Prostate gland (tissue), 2 donors: ENCODE measurements at regions of chr1 and their contacts with region 1.

Region 1: DNA sequence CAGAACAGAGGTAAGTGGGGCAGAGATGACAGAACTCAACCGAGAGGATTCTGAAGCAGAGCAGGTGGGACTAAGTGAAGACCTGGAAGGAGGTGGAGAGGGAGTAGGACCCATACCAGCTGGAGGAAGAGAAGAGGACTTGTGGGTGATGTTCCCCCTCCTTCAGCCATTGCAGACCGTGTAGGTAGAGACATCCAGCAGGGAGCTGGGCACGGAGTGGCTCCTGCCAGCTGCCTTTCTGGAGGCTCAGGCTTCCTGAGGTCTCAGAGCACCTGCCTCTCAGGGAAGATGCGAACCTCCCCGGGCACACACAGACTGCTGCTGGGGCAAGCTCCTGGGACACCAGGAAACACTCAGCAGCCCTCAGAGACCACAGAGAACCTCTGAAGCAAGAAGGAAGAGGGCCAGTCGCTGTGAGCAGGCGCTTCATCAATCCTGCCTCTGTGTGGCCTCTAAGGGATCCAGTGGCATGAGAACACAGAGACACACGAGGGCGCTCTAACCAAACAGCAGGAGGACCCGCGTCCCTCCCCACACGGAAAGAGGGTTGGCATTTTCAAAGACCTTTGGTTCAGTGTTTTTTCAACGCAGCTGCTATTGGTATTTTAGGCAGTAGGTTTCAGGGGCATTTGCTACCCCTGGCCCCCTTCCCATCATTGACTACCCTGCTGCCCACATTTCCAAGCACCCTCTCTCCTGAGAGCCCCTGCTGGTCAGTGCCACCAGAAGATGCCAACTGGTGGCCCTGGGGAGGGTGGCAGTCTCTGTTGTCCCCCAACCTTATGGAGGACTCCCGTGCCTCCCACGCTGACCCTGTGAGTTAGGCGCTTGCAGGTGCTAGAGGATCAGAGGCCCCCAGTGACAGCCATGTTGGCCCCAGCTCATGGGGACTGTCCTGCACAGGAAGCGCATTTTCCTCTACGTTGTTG is 89.6 kb upstream of the EDN2 start:
- DNase-seq: peak; percentile 80
- H3K4me3 ChIP-seq: no peak overlapping the region
- H3K27ac ChIP-seq: no peak overlapping the region
- H3K4me1 ChIP-seq: no peaks in the 10 kb centered on the region
- H3K27me3 ChIP-seq: no peaks in the 10 kb centered on the region
- CTCF ChIP-seq: peak; percentile 33 to 88 (median 76)
- POLR2A ChIP-seq: no peak

Region 2: GRCh38 chr1:41213341-41213740 is 360.7 kb before region 1 on chr1:
- intact Hi-C with region 1: no loop called
- DNase-seq: no peak
- H3K4me3 ChIP-seq: no peak overlapping the region
- H3K27ac ChIP-seq: no peak overlapping the region
- H3K4me1 ChIP-seq: peaks cover 6% of the 10 kb centered on the region
- H3K27me3 ChIP-seq: no peaks in the 10 kb centered on the region
- CTCF ChIP-seq: no peak
- POLR2A ChIP-seq: no peak

Region 3: DNA sequence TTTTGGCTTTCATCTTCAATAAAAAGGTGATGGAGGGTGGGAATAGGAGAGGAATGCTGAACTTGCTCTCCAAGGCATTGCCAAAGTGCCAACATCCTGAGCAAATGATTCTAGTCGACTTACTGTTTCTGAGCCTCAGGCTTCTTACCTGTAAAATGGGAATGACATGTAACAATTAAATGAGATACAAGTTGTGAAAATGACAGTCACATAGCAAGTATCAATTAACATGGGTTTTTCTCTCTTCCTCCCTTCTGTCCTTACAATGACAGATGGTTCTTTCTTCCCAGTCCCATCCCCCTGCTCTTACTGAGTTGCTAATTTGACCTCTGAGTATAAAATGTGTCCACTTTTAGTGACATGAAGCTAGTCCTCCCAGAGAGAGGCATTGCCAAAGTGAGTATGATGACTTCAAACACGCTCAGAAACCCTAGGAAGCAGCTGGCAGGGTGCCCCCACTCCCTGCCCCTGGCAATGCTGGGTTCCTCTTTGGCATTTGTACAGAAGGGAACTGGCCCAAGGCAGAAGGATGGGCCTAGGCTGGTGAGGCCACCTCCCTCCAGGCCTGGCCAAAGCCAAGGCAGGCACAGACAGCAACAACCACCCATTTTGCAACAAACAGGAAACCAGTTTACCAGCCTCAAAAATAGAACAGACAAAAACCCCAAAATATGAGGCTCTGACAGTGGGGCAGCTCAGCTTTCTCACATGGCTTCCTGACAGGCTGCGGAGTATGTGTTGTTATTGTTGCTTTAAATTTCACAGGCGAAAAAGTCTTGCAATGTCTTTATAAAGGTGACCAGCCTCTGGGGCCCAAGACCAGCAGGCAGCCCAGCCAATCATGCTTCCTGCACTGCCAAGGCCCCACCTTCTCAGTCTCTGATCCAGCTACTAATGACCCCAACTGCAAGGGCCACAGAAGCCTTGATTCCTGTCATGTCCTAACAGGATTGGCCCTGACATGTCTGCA is 228.8 kb after region 1 on chr1:
- intact Hi-C with region 1: loop called (anchors 10 kb)
- DNase-seq: peak; percentile 72
- H3K4me3 ChIP-seq: no peak overlapping the region
- H3K27ac ChIP-seq: peak overlapping the region; percentile 29 to 33
- H3K4me1 ChIP-seq: no peaks in the 10 kb centered on the region
- H3K27me3 ChIP-seq: no peaks in the 10 kb centered on the region
- CTCF ChIP-seq: no peak
- POLR2A ChIP-seq: no peak